Left cardiac atrium (tissue), 4 donors: ENCODE measurements at regions of chr4 and their contacts with region 1.

Region 1: DNA sequence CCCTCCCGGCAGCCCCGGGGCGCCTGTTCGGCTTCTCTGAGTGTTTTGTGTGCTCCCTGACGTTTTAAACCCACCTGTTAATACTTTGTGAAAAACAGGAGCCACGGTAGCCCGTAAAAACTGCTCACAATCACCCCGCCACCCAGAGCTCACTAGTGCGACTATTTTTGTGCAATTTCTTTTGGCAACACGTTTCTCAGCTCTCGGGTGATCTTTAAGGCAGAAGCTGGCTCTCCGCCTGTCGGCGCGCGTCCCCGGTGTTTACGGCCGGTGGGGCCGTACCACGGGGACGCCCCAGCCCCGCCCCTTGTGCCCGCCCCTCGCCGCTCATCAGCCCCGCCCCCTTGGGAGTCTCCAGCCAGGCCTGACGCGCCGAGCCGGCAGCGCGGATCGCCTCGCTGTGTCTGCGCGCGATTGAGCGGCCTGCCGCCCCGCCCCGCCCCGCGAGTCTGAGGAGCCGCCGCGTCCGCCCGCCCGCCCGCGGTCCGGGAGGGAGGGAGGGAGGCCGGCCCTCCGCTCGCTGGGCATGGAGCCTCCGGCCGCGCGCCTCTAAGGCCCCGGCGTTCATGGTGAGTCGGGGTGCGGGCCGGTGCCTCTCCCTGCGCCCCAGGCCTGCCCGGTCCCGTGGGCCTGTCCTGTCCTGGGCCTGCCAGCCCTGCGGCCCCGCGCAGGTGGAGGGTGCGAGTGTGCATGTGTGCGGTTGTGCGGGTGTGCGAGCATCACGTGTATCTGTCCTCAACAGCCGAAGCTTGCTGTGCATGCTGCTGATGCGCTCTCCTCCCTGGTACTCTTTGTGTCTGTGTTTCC is 56.2 kb upstream of the TADA2B start:
- DNase-seq: peak; percentile 95
- ATAC-seq: peak; percentile 96

Region 2: DNA sequence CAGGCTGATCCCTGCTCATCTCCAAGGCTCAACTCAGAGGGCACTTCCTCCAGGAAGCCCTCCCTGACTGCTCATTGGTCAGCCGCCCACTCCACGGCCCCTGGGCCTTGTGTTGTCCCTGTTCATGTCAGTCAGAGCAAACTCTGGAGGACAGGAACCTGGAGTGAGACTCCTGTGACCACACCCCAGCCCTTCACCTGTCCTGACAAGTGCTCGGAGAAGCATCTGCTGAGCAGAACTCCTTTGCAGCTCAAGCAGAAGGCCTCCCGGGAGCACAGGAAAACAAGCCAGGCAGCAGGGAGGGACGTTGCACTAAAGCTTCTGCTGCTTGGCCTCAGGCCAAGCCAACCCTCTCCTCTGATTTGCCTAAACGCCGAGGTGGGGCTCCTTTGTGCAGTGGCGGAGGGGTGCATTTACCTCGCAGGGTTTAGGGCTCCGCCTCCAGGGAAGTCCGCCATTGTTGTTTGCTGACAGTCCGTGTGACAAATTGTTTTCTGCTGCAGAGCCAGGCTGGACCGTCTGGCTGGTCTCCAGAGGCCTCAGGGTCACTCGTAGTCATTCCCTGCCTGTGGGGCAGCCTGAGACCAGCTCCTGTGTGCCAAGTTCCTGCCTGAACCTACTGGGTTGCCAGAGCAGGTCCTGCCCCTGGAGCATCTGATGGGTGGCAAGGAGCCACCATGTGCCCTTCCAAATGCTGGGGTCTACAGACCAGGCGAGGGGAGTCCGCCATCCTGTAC is 1030.5 kb before region 1 on chr4:
- intact Hi-C with region 1: no loop called
- DNase-seq: no peak
- ATAC-seq: no peak

Region 3: GRCh38 chr4:6749341-6750171 is 237.4 kb before region 1 on chr4:
- intact Hi-C with region 1: no loop called
- DNase-seq: peak; percentile 83
- ATAC-seq: peak; percentile 68 to 74

Region 4: DNA sequence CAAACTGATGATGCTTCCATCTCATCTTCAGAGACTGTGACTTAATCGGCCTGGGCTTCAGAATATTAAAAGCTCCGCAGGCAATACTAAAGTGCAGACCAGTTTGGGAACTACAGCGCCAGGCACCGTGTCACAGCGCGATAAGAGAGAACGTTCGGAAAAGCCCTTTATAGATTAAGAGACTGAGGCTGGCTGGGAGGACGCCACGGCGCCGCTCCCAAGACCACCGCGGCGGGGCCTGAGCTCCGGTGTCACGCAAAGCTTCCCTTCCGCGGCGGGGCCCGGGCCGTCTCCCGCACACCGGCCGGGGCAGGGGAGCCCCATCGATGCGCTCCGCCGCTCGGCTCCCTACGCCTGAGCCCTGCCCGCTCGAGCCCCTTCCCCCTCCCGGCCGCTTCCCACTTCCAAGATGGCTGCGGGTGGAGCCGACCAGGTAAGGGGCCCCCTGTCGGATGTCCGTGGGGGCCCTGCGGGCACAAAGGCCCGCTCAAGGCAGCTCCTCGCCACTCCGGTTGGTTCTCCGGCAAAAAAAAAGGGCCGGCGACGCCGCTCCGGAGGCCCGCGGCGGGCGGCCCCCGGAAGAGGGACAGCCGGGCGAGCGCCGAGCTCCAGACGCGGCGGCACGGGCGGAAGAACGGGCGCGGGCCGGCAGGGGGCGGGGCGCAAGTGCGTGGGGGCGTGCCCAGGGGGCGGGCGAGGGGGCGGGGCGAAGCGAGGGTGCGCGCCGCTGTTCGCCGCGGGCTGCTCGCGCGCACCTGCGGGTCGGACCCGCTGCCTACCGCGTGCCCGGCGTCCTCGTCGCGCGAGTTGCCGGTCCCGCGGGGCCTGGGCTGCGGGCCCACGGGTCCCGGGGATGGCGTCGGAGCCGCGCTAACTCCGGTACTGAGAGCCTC is 77.7 kb before region 1 on chr4 and contains the start of gene TBC1D14:
- intact Hi-C with region 1: loop called in 1 of 2 experiments (anchors 2 kb)
- DNase-seq: peak; percentile 91
- ATAC-seq: peak; percentile 96
- total RNA-seq, gene TBC1D14: 34.7 to 35.9 TPM

Region 5: DNA sequence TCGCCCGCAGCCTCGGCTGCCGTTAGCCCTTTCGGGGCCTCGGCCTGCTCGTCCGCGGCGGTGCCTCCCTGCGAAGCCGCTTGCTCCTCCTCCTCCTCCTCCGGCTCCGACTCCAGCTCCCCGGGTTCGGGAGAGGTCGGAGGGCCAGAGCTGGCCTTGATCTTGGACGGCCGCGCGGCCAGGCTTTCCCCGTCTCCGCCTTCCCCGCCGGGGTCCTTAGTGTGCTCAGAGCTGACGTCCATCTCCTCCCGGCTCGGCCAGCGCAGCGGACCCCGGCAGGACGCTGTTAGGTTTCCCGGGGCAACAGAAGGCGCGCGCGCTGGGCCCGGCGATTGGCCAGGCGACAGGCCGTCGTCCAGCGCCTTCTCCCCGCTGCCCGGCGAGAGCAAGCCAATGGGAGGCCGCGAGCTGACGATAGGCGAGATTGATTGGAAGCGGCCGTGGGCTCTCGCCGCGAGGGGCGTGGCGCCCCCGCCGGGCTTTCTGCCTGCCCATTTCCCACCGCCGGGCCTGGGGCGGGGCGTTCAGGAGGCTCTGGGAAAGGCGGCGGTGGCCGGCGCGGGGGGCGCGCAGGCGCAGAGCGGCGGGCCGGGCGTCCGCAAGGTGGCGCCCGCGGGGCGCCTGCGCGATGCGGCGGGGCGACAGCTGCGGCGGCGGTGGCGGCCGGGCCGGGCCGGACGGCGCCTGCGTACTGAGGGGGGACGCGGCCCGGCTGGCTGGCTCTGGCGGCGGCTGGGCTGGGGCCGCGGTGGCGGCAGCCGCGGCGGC is 55.9 kb after region 1 on chr4 and contains the start of gene TADA2B:
- intact Hi-C with region 1: loop called in 1 of 2 experiments (anchors 10 kb)
- DNase-seq: peak; percentile 98
- ATAC-seq: peak; percentile 94
- total RNA-seq, gene TADA2B: 23.2 to 30.7 TPM

Region 6: GRCh38 chr4:7059662-7060061 is 72.7 kb after region 1 on chr4:
- intact Hi-C with region 1: no loop called
- DNase-seq: peak; percentile 3
- ATAC-seq: no peak